Naive thymus-derived CD8-positive, alpha-beta T cell (primary cell): ENCODE measurements at regions of chr18 and their contacts with region 1.

Region 1: DNA sequence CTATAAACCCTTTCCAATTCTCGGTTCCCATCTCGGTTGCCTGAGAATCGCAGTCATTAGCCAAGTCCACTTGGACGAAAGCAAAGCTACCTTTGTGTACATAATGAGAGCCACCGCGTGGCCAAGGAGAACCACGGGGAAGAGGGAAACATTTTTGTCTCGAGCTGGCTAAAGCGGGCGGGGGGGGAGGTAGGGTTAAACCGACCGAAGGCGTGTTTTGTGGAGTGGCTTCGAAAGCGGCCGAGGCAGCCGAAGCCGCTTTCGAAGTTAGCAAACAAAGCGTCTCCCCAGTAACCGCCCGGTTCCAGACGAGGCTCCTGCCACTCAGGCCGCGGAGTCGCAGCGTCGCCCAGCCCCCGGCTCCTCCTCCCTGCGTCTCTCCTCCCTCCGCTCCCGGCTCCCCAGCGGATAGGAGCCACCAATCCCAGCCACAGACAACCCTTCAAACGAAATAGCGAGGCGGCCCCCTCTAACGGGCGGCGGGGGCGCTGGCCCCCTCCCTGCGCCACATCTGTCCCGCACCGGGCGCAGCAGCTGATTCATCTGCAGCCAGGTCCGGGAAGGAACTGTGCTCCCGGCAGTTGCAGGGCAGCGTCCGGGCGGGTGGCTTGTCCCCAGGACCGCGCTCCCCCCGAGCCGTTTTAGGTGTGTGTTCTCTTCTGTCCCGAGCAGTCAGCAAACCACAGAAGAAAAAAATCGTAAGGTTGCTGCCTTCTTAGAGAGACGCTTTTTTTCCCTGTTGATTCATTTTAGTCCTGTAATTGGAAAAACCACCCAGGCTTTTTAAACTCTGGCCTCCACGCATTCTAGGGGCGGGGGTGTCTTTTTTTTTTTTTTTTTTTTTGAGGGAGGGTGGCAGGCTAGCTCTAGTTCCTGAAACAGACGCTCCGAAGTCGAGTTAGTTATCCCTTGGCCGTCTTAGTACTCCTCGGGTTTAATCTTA is 1.8 kb upstream of the TGIF1 start:
- DNase-seq: peak; percentile 66 to 94 (median 85)
- ATAC-seq: peak; percentile 52 to 59
- H3K4me3 Mint-ChIP-seq: peak overlapping the region; percentile 88 to 99 (median 97)
- H3K27ac Mint-ChIP-seq: peak overlapping the region; percentile 98 to 100 (median 100)
- H3K4me1 Mint-ChIP-seq: peaks cover 13 to 38% (median 28%) of the 10 kb centered on the region in 4 donors
- H3K27me3 Mint-ChIP-seq: peaks cover 0 to 3% (median 0%) of the 10 kb centered on the region in 5 donors

Region 2: GRCh38 chr18:3261371-3262246 is 186.6 kb before region 1 on chr18 and contains the start of gene MYL12B:
- POLR2A ChIA-PET with region 1: interaction called, 22 read pairs
- DNase-seq: peak; percentile 64 to 94 (median 77)
- ATAC-seq: peak; percentile 73 to 76
- H3K4me3 Mint-ChIP-seq: peak within 1 kb of the TSS; percentile 91 to 100 (median 98)
- H3K27ac Mint-ChIP-seq: peak within 1 kb of the TSS; percentile 97 to 100 (median 99)
- H3K4me1 Mint-ChIP-seq: peaks cover 40 to 89% (median 84%) of the 10 kb centered on the region in 4 donors
- H3K27me3 Mint-ChIP-seq: no peaks in the 10 kb centered on the region
- polyA plus RNA-seq, gene MYL12B: 828 to 956 (median 830) TPM

Region 3: GRCh38 chr18:3297025-3297984 is 150.9 kb before region 1 on chr18:
- POLR2A ChIA-PET with region 1: interaction called, 57 read pairs
- DNase-seq: peak; percentile 80 to 95 (median 90)
- ATAC-seq: peak; percentile 96 to 98
- H3K4me3 Mint-ChIP-seq: peak overlapping the region; percentile 92 to 98 (median 95)
- H3K27ac Mint-ChIP-seq: peak overlapping the region; percentile 82 to 95 (median 87)
- H3K4me1 Mint-ChIP-seq: peaks cover 4 to 17% (median 10%) of the 10 kb centered on the region in 4 donors
- H3K27me3 Mint-ChIP-seq: peaks cover 17 to 34% (median 19%) of the 10 kb centered on the region in 5 donors

Region 4: GRCh38 chr18:3411854-3412268 is 36.3 kb before region 1 on chr18:
- POLR2A ChIA-PET with region 1: interaction called, 10 read pairs
- DNase-seq: peak in 4 of 10 donors; percentile 10 to 15 (median 10)
- ATAC-seq: peak; percentile 56 to 68
- H3K4me3 Mint-ChIP-seq: peak overlapping the region; percentile 28 to 78 (median 68)
- H3K27ac Mint-ChIP-seq: peak overlapping the region in 1 of 10 donors; percentile 73
- H3K4me1 Mint-ChIP-seq: peaks cover 3 to 16% (median 6%) of the 10 kb centered on the region in 4 donors
- H3K27me3 Mint-ChIP-seq: peaks cover 0 to 2% (median 0%) of the 10 kb centered on the region in 5 donors